Activated B cell treated with CpG ODN at 0.5 μM for 24 hours (primary cell): ENCODE measurements at regions of chr3 and their contacts with region 1.

Region 1: GRCh38 chr3:18444595-18445400 is 19.7 kb upstream of the SATB1 start:
- DNase-seq: peak; percentile 82
- ATAC-seq: peak; percentile 81
- H3K4me3 Mint-ChIP-seq: peak overlapping the region; percentile 93
- H3K27ac Mint-ChIP-seq: peak overlapping the region; percentile 91
- H3K4me1 Mint-ChIP-seq: peaks cover 55% of the 10 kb centered on the region
- H3K27me3 Mint-ChIP-seq: peaks cover 5% of the 10 kb centered on the region
- CTCF ChIP-seq: no peak

Region 2: GRCh38 chr3:17742108-17742879 is 702.5 kb before region 1 on chr3 and contains the start of gene TBC1D5:
- CTCF ChIA-PET with region 1: no interaction called
- POLR2A ChIA-PET with region 1: no interaction called
- intact Hi-C with region 1: loop called (anchors 1 kb)
- DNase-seq: peak; percentile 91
- ATAC-seq: peak; percentile 83
- H3K4me3 Mint-ChIP-seq: peak within 1 kb of the TSS; percentile 96
- H3K27ac Mint-ChIP-seq: peak within 1 kb of the TSS; percentile 97
- H3K4me1 Mint-ChIP-seq: peaks cover 57% of the 10 kb centered on the region
- H3K27me3 Mint-ChIP-seq: no peaks in the 10 kb centered on the region
- CTCF ChIP-seq: no peak
- total RNA-seq, gene TBC1D5: 102 and 106 TPM in 2 replicates

Region 3: DNA sequence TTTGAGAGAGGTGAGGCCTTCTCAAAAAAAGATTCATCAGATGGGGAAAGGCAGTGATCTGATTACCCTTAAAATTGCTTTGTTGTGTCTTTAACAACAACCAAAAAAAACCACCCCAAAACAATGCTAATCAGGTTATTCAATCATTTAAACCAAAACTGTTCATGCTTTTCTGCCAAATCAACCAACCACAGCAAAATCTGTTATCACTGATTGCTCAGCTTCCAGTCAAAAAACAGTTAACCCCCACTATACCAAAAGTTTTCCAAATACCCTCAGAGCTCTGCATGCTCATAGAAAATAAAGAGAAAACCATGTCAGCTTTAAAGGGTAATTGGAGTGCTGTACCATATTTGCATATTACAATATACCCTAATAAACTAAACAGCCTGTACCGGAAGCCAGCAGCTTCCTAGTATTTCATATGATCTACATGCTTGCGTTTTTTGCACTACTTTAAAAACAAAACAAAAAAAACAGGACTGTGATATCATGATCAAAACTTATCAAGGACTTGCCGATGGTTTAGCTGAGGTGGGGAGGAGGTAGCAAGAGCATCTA is 42.5 kb before region 1 on chr3:
- CTCF ChIA-PET with region 1: no interaction called
- POLR2A ChIA-PET with region 1: no interaction called
- intact Hi-C with region 1: no loop called
- DNase-seq: no peak
- ATAC-seq: no peak
- H3K4me3 Mint-ChIP-seq: no peak overlapping the region
- H3K27ac Mint-ChIP-seq: peak overlapping the region; percentile 36
- H3K4me1 Mint-ChIP-seq: peaks cover 7% of the 10 kb centered on the region
- H3K27me3 Mint-ChIP-seq: no peaks in the 10 kb centered on the region
- CTCF ChIP-seq: no peak

Region 4: GRCh38 chr3:18424729-18425640 is 19.8 kb before region 1 on chr3 and contains the start of gene SATB1:
- CTCF ChIA-PET with region 1: interaction called, 5 read pairs
- POLR2A ChIA-PET with region 1: interaction called, 6 read pairs
- intact Hi-C with region 1: loop called (anchors 1 kb)
- DNase-seq: peak; percentile 68
- ATAC-seq: peak; percentile 49
- H3K4me3 Mint-ChIP-seq: peak within 1 kb of the TSS; percentile 91
- H3K27ac Mint-ChIP-seq: peak within 1 kb of the TSS; percentile 87
- H3K4me1 Mint-ChIP-seq: peaks cover 40% of the 10 kb centered on the region
- H3K27me3 Mint-ChIP-seq: no peaks in the 10 kb centered on the region
- CTCF ChIP-seq: no peak
- total RNA-seq, gene SATB1: 23.0 and 30.8 TPM in 2 replicates

Region 5: GRCh38 chr3:18531662-18532236 is 87.0 kb after region 1 on chr3:
- CTCF ChIA-PET with region 1: no interaction called
- POLR2A ChIA-PET with region 1: no interaction called
- intact Hi-C with region 1: loop called (anchors 2 kb)
- DNase-seq: no peak
- ATAC-seq: peak; percentile 97
- H3K4me3 Mint-ChIP-seq: no peak overlapping the region
- H3K27ac Mint-ChIP-seq: peak overlapping the region; percentile 37
- H3K4me1 Mint-ChIP-seq: peaks cover 49% of the 10 kb centered on the region
- H3K27me3 Mint-ChIP-seq: no peaks in the 10 kb centered on the region
- CTCF ChIP-seq: no peak

Region 6: GRCh38 chr3:18740631-18741583 is 296.1 kb after region 1 on chr3:
- CTCF ChIA-PET with region 1: no interaction called
- POLR2A ChIA-PET with region 1: no interaction called
- intact Hi-C with region 1: loop called (anchors 2 kb)
- DNase-seq: no peak
- ATAC-seq: peak; percentile 73
- H3K4me3 Mint-ChIP-seq: peak overlapping the region; percentile 73
- H3K27ac Mint-ChIP-seq: peak overlapping the region; percentile 88
- H3K4me1 Mint-ChIP-seq: peaks cover 68% of the 10 kb centered on the region
- H3K27me3 Mint-ChIP-seq: no peaks in the 10 kb centered on the region
- CTCF ChIP-seq: no peak

Region 7: GRCh38 chr3:19146685-19147650 is 702.2 kb after region 1 on chr3:
- CTCF ChIA-PET with region 1: no interaction called
- POLR2A ChIA-PET with region 1: no interaction called
- intact Hi-C with region 1: loop called (anchors 5 kb)
- DNase-seq: peak; percentile 64
- ATAC-seq: peak; percentile 73
- H3K4me3 Mint-ChIP-seq: peak overlapping the region; percentile 95
- H3K27ac Mint-ChIP-seq: peak overlapping the region; percentile 85
- H3K4me1 Mint-ChIP-seq: peaks cover 14% of the 10 kb centered on the region
- H3K27me3 Mint-ChIP-seq: peaks cover 9% of the 10 kb centered on the region
- CTCF ChIP-seq: no peak